Pancreas (tissue), 10 donors: ENCODE measurements at regions of chr5 and their contacts with region 1.

Region 1: GRCh38 chr5:52787600-52788504 is at the starts of genes ITGA1 and PELO:
- DNase-seq: peak; percentile 48 to 79 (median 68)
- ATAC-seq: peak; percentile 83 to 95 (median 90)
- H3K4me3 ChIP-seq: peak within 1 kb of the TSS; percentile 46 to 55 (median 48)
- H3K27ac ChIP-seq: peak within 1 kb of the TSS; percentile 8 to 78 (median 56)
- H3K4me1 ChIP-seq: peaks cover 0 to 4% (median 4%) of the 10 kb centered on the region in 3 donors
- H3K27me3 ChIP-seq: no peaks in the 10 kb centered on the region
- CTCF ChIP-seq: no peak
- total RNA-seq, gene ITGA1: 3.2 to 18.3 (median 6.5) TPM
- total RNA-seq, gene PELO: 6.0 to 12.2 (median 8.2) TPM

Region 2: GRCh38 chr5:52638732-52639131 is 149.1 kb before region 1 on chr5:
- intact Hi-C with region 1: no loop called
- DNase-seq: no peak
- ATAC-seq: no peak
- H3K4me3 ChIP-seq: no peak overlapping the region
- H3K27ac ChIP-seq: no peak overlapping the region
- H3K4me1 ChIP-seq: no peaks in the 10 kb centered on the region
- H3K27me3 ChIP-seq: no peaks in the 10 kb centered on the region
- CTCF ChIP-seq: no peak

Region 3: GRCh38 chr5:52915176-52915875 is 127.5 kb after region 1 on chr5:
- intact Hi-C with region 1: loop called in 2 of 3 experiments (anchors 5 to 10 kb)
- DNase-seq: peak in 3 of 6 donors; percentile 8 to 39 (median 16)
- ATAC-seq: peak; percentile 83 to 100 (median 98)
- H3K4me3 ChIP-seq: no peak overlapping the region
- H3K27ac ChIP-seq: no peak overlapping the region
- H3K4me1 ChIP-seq: no peaks in the 10 kb centered on the region
- H3K27me3 ChIP-seq: no peaks in the 10 kb centered on the region
- CTCF ChIP-seq: peak; percentile 24 to 61 (median 45)